Endothelial cell of umbilical vein (primary cell): ENCODE measurements at regions of chr20 and their contacts with region 1.

Region 1: DNA sequence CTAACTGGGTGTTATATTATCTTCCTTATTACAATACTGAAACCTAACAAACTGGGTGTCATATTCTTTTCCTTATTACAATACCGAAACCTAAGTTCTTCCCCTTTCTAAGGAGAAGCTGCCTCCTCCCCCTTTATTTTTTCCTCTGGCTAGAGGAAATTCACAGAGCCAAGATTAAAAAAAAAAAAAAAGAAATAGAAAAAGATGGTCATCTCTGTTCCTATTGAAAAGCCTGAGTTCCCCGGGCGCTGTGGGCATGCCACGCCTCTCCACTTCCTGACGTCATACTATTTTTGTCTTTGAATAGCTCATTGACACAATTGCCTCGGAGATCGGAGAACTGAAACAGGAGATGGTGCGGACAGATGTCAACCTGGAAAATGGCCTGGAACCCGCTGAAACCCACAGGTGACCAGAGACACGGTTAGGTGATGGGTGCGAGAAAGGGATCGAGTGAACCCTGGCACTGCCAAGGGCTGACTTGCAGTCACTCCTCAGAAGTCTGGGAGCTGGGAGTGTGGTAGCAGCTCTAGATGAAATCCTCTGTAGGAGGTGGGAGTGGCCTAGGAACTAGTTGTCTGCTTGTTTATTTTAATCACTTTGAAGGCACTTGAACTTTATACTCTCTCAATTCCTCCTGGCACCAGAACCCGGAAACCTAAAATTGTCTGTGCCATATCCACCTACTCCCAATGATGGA is 82.2 kb upstream of the NAA20 start:
- DNase-seq: peak; percentile 94
- H3K4me3 ChIP-seq: peak overlapping the region in 1 of 3 experiments; percentile 31
- H3K27ac ChIP-seq: peak overlapping the region; percentile 79
- H3K4me1 ChIP-seq: peaks cover 75% of the 10 kb centered on the region
- H3K27me3 ChIP-seq: no peaks in the 10 kb centered on the region
- CTCF ChIP-seq: no peak
- POLR2A ChIP-seq: no peak

Region 2: DNA sequence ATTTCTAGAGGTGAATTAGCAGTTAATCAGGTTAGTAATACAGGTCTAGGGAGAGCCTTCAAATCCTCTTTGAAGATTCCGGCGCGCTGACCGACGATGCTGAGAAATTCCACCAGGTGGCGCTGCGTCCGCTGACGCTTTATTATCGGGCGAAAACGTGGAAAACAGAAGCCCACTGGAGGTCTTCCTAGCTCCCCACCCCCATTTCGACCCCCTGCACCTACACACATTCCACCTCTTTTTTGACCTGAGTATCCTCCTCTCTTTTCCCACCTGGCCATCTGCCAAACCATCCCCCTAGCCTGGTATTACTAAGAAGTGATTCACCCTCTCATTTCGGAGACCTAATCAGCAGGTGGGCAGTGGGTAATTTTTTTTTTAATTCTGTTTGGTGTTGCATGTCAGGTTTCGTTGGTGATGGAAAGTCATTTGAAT is 242.2 kb before region 1 on chr20:
- CTCF ChIA-PET with region 1: interaction called, 5 read pairs
- POLR2A ChIA-PET with region 1: no interaction called
- dilution Hi-C with region 1: no loop called
- intact Hi-C with region 1: loop called (anchors 1 kb)
- DNase-seq: peak; percentile 68
- H3K4me3 ChIP-seq: no peak overlapping the region
- H3K27ac ChIP-seq: no peak overlapping the region
- H3K4me1 ChIP-seq: peaks cover 5% of the 10 kb centered on the region
- H3K27me3 ChIP-seq: no peaks in the 10 kb centered on the region
- CTCF ChIP-seq: peak; percentile 84 to 87
- POLR2A ChIP-seq: no peak

Region 3: GRCh38 chr20:19815553-19815991 is 119.4 kb before region 1 on chr20:
- CTCF ChIA-PET with region 1: interaction called, 6 read pairs
- POLR2A ChIA-PET with region 1: interaction called, 4 read pairs
- dilution Hi-C with region 1: no loop called
- intact Hi-C with region 1: loop called (anchors 1 kb)
- DNase-seq: peak; percentile 98
- H3K4me3 ChIP-seq: no peak overlapping the region
- H3K27ac ChIP-seq: peak overlapping the region; percentile 96
- H3K4me1 ChIP-seq: peaks cover 59% of the 10 kb centered on the region
- H3K27me3 ChIP-seq: no peaks in the 10 kb centered on the region
- CTCF ChIP-seq: no peak
- POLR2A ChIP-seq: peak; percentile 20

Region 4: DNA sequence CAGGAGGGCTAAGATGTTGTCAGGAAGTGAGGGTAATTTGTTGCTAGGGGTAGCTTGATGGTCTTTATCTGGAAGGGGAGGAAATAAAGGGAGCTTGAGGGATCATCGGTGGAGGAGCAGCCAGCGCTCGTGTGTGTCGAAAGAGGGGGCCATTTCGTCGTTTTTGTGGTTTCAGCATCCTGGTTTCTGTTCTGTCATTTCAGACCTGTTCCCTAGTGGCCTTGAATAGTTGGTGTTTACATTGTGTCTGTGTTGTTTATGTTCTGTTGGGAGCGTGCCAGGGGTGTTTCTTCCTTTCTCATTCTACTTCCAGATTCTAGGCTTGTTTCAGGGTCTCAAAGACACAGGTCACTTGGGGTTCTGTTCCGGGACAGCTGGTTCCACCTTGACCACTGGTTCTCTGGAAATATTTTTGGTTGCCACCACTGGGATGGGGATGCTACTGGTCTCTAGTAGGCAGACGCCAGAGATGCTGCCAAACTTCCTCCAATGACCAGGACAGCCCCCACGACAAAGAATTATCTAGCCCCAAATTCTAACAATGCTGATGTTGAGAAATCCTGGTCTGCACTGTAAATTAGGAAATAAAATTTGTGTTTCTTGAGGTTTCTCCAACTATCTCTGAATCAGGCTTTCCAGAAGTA is 31.7 kb before region 1 on chr20:
- CTCF ChIA-PET with region 1: interaction called, 5 read pairs
- POLR2A ChIA-PET with region 1: interaction called, 3 read pairs
- dilution Hi-C with region 1: no loop called
- intact Hi-C with region 1: loop called (anchors 1 kb)
- DNase-seq: peak; percentile 51
- H3K4me3 ChIP-seq: no peak overlapping the region
- H3K27ac ChIP-seq: peak overlapping the region; percentile 3
- H3K4me1 ChIP-seq: peaks cover 18% of the 10 kb centered on the region
- H3K27me3 ChIP-seq: no peaks in the 10 kb centered on the region
- CTCF ChIP-seq: peak; percentile 14 to 23
- POLR2A ChIP-seq: no peak

Region 5: GRCh38 chr20:19913927-19914614 is 20.9 kb before region 1 on chr20:
- CTCF ChIA-PET with region 1: interaction called, 5 read pairs
- POLR2A ChIA-PET with region 1: no interaction called
- dilution Hi-C with region 1: no loop called
- intact Hi-C with region 1: loop called (anchors 2 kb)
- DNase-seq: peak; percentile 87
- H3K4me3 ChIP-seq: no peak overlapping the region
- H3K27ac ChIP-seq: peak overlapping the region; percentile 80
- H3K4me1 ChIP-seq: peaks cover 20% of the 10 kb centered on the region
- H3K27me3 ChIP-seq: no peaks in the 10 kb centered on the region
- CTCF ChIP-seq: no peak
- POLR2A ChIP-seq: no peak

Region 6: DNA sequence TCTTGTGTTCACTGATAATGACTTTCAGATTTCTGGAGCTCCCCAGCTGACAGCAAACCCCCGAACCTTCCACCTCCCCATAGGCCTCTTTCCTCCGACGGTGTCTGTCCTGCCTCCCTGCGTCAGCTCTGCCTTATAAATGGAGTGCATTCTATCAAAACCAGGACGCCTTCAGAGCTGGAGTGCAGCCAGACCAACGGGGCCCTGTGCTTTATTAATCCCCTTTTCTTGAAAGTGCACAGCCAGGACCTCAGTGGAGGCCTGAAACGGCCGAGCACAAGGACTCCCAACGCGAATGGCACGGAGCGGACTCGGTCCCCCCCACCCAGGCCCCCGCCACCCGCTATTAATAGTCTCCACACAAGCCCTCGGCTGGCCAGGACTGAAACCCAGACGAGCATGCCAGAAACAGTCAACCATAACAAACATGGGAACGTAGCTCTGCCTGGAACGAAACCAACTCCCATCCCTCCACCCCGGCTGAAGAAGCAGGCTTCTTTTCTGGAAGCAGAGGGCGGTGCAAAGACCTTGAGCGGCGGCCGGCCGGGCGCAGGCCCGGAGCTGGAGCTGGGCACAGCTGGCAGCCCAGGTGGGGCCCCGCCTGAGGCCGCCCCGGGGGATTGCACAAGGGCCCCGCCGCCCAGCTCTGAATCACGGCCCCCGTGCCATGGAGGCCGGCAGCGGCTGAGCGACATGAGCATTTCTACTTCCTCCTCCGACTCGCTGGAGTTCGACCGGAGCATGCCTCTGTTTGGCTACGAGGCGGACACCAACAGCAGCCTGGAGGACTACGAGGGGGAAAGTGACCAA is 39.9 kb after region 1 on chr20:
- CTCF ChIA-PET with region 1: interaction called, 9 read pairs
- POLR2A ChIA-PET with region 1: interaction called, 4 read pairs
- dilution Hi-C with region 1: no loop called
- intact Hi-C with region 1: loop called (anchors 1 kb)
- DNase-seq: peak; percentile 85
- H3K4me3 ChIP-seq: peak overlapping the region in 1 of 3 experiments; percentile 2
- H3K27ac ChIP-seq: peak overlapping the region; percentile 72
- H3K4me1 ChIP-seq: peaks cover 46% of the 10 kb centered on the region
- H3K27me3 ChIP-seq: no peaks in the 10 kb centered on the region
- CTCF ChIP-seq: no peak
- POLR2A ChIP-seq: no peak

Region 7: DNA sequence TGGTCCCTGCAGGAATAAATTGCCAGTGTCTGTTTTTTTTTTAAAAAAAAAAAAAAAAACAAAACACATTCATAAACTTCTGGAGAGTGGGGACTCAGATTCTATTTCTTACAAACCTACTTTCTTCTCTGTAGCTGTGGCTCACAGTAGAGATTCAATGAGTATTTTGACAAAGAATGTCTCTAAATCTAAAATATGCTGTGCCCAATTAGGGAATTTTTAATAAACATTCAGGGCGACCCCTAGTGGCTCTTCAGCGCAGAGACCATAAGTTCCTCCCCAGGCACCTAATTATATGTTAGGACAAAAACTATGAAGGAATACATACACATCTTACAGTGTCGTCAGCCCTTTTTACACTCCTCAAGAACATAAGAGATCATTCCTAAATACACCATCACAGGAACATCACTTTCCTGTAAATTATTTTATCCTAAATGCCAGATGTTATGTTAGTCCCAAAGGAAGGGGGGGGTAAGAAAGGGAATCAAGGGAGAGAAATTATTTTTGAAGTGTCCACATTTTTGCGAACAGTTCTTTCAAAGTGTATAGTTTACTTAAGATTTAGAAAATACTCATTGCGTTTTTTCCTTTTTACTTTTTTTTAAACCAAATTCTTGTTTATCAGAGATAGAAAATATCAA is 60.4 kb after region 1 on chr20:
- CTCF ChIA-PET with region 1: interaction called, 7 read pairs
- POLR2A ChIA-PET with region 1: interaction called, 7 read pairs
- dilution Hi-C with region 1: no loop called
- intact Hi-C with region 1: loop called (anchors 1 kb)
- DNase-seq: peak; percentile 65
- H3K4me3 ChIP-seq: no peak overlapping the region
- H3K27ac ChIP-seq: no peak overlapping the region
- H3K4me1 ChIP-seq: peaks cover 48% of the 10 kb centered on the region
- H3K27me3 ChIP-seq: no peaks in the 10 kb centered on the region
- CTCF ChIP-seq: peak; percentile 66 to 74
- POLR2A ChIP-seq: no peak

Region 8: DNA sequence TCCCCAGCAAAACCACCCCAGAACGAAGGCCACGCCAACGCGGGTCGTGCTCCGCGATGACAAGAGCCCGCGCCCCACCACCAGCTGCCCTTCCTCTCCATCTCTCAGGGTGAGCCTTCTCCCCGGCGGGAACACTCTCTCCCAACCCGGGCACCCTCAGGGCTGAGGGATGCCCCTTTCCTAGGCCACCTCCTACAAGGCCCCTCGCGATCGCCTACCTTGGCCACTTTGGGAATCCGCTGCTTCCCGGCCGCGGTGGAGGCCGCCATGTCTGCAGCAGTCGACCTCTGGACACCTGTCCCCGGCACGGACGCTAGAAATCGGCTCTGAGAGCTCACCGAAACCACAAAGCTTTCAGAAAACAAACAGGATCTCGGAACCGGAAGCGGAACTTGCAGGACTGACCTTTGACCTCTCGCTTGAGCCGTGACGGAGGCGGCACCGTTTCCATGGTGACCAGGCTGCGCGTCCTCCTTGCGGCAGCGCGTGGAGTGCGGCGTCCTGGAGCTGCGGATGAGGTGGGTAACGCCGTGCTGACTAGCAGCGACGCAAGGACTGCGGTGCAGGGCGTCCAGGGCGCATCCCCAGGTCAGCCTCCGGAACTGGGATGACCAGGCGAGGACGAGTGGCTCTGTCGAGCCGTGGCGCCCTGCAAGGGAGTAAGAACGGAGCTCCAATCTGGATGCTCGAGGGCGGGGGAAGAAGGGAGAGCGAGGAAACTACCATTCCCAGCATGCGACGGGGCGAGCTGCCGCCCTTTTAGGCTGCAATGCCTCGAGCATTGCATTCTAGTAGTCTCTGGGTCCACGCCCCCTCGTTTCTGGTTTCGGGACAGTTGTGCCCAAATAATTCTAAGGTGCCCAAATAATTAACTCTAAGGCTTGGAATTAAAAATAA is 117.4 kb after region 1 on chr20 and contains the starts of genes CFAP61 and CRNKL1:
- CTCF ChIA-PET with region 1: no interaction called
- POLR2A ChIA-PET with region 1: no interaction called
- dilution Hi-C with region 1: no loop called
- intact Hi-C with region 1: no loop called
- DNase-seq: peak; percentile 98
- H3K4me3 ChIP-seq: peak within 1 kb of the TSS; percentile 49 to 95 (median 69)
- H3K27ac ChIP-seq: peak within 1 kb of the TSS; percentile 49
- H3K4me1 ChIP-seq: peaks cover 8% of the 10 kb centered on the region
- H3K27me3 ChIP-seq: peaks cover 9 to 23% of the 10 kb centered on the region in 2 experiments
- CTCF ChIP-seq: peak in 1 of 2 donors; percentile 15
- POLR2A ChIP-seq: peak; percentile 29
- total RNA-seq, gene CFAP61: not detected in 2 replicates
- total RNA-seq, gene CRNKL1: 20.6 and 22.3 TPM in 2 replicates